ENCODE measurements at regions of chr6 and their contacts with region 1.

Region 1: GRCh38 chr6:42547407-42548329 is 16.2 kb upstream of the UBR2 start:
- DNase-seq: peak; percentile 45
- H3K4me3 ChIP-seq: peak overlapping the region; percentile 53
- H3K27ac ChIP-seq: no peak overlapping the region
- H3K27me3 ChIP-seq: no peaks in the 10 kb centered on the region
- CTCF ChIP-seq: peak; percentile 100

Region 2: DNA sequence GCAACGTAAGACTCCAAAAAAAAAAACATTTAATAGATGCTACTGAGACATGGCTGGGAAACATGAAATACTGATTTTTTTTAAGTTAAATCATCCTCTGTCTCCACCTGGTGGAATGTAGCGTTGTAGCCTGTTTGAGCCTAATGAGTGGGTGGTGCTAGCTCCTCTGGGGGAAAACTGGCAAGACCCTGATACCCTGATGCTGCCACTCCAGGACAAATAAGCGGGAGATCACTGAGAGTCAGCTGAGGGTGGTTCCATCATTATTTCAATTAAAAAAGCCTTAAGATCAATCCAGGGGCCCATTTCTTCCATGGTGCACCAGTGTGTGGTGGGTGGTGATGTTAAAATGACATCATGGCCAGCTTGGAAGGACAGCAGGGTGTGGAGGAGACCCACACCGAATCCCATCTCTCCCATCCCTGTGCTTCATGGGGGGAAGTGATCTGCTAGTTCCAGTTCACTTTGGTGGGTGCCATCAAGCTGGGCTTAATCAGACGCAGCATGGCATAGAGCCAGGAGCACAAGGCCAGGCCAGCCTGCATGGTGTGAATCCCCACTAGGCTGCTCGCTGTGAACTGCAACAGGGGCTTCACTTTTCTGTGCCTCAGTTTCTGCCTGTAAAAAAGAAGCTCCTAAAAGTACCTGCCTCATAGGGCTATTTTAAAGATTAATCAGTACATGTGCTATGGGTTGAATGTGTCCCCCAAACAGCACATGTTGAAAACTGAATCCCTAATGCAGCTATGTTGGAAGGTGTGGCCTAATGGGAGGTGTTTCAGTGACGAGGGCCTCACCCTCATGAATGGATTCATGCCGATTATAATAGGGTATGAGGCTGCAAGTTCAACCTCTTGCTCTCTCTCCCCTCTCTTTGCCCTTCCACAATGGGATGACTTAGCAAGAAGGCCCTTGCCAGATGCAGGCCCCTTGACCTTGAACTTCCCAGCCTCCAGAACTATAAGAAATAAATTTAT is 317.0 kb before region 1 on chr6:
- CTCF ChIA-PET with region 1: interaction called, 45 read pairs
- POLR2A ChIA-PET with region 1: no interaction called
- DNase-seq: no peak
- H3K4me3 ChIP-seq: no peak overlapping the region
- H3K27ac ChIP-seq: no peak overlapping the region
- H3K27me3 ChIP-seq: no peaks in the 10 kb centered on the region
- CTCF ChIP-seq: peak; percentile 56

Region 3: DNA sequence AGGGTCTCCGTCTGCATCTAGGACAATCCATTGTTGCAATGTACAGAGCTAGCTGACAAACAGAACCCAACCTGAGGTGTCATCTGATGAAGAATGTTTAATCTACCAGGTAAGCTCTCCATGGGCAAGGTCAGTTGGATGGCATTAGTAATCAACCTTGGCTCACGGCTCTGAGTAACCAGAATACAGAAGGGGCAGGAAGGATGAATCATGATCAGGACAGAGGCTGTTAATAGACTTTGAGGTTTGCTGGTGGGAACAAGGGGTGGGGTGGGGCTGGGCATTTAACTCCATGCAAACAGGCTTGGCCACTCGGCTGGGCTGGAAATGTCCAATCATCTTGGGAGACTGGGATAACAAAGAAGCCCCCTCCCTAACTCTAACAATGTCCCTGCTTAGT is 252.9 kb before region 1 on chr6:
- CTCF ChIA-PET with region 1: interaction called, 13 read pairs
- POLR2A ChIA-PET with region 1: no interaction called
- DNase-seq: no peak
- H3K4me3 ChIP-seq: no peak overlapping the region
- H3K27ac ChIP-seq: no peak overlapping the region
- H3K27me3 ChIP-seq: no peaks in the 10 kb centered on the region
- CTCF ChIP-seq: no peak

Region 4: GRCh38 chr6:42359021-42359420 is 188.6 kb before region 1 on chr6:
- CTCF ChIA-PET with region 1: interaction called, 13 read pairs
- POLR2A ChIA-PET with region 1: no interaction called
- DNase-seq: no peak
- H3K4me3 ChIP-seq: no peak overlapping the region
- H3K27ac ChIP-seq: no peak overlapping the region
- H3K27me3 ChIP-seq: no peaks in the 10 kb centered on the region
- CTCF ChIP-seq: no peak

Region 5: DNA sequence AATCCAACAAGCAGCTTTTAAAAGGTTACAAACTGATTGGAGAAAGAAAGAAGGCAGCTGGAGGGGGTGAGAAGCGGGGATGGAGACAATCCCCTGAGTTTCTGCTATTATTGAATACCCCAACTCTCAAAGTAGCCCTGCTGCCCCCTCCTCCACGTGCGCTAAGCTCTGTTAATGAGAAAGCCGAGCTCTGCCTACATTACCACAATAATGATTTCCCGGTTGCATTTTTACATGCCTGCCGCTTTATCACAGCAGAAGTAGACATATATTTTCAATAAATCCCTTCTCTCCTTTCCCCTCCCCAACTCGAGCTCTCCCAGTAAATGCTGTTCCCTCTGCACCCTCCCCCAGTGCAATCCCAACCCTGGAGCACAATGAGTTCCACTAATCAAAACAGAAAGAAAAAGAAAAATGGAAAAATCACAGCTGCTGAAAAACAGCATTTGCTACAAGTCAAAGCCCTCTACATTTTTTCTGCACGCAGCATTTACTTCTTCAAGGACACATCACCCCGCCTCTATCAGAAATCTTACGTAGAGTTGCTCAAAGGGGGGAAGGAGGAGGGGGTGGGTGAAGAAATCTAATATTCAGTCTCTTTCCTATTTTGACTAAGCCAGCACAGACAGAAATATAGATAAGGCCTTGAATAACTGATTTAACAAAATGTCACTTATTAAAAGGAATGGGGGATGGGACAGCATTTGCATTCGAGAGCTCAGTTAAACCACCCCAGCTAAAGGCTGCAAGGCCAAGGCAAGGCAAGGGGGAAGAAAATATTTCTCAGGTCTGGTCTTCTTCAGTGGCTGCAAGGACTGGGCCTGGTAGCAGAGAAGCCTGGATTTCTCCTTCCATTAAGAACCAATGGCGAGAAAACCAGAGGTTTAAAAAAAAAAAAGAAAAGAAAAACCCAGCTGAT is 106.6 kb before region 1 on chr6:
- CTCF ChIA-PET with region 1: interaction called, 37 read pairs
- POLR2A ChIA-PET with region 1: interaction called, 3 read pairs
- DNase-seq: peak; percentile 57
- H3K4me3 ChIP-seq: peak overlapping the region; percentile 27
- H3K27ac ChIP-seq: peak overlapping the region; percentile 63
- H3K27me3 ChIP-seq: no peaks in the 10 kb centered on the region
- CTCF ChIP-seq: no peak

Region 6: DNA sequence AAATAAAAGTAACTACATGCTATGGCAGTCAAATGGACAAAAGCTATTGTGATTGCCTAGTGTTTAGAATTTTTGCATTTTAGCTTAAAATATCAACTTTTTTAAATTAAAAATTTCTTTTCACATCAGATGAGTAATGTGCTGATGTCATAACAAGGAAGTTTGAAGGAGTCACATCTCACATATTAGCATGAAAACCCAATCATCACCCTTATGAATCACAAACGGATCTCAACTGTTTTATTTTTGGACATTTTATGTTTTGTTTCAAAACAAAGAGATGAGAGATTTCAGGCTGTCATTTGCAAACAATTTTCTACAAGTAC is 42.3 kb before region 1 on chr6:
- CTCF ChIA-PET with region 1: interaction called, 10 read pairs
- POLR2A ChIA-PET with region 1: no interaction called
- DNase-seq: no peak
- H3K4me3 ChIP-seq: no peak overlapping the region
- H3K27ac ChIP-seq: no peak overlapping the region
- H3K27me3 ChIP-seq: no peaks in the 10 kb centered on the region
- CTCF ChIP-seq: no peak

Region 7: GRCh38 chr6:42624601-42625000 is 76.9 kb after region 1 on chr6:
- CTCF ChIA-PET with region 1: no interaction called
- POLR2A ChIA-PET with region 1: no interaction called
- DNase-seq: no peak
- H3K4me3 ChIP-seq: no peak overlapping the region
- H3K27ac ChIP-seq: no peak overlapping the region
- H3K27me3 ChIP-seq: no peaks in the 10 kb centered on the region
- CTCF ChIP-seq: no peak

Region 8: DNA sequence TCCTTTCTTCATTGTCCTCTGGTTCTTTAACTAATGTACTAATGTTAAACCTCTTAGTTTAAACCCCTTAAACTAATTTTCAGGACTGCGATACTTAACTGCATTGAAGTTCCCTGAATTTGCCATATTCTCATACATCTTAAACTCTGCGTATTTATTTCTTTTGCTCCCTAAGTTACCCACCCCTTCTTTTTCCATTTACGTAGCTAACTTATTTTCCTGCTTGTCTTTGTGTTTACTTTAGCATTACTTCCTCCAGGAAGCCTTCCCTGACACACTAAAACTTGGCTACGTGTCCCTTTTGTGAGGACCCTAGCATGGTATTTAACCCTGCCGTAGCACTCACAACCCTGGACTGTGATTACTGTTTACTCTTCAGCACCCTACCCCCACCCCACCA is 95.1 kb after region 1 on chr6:
- CTCF ChIA-PET with region 1: no interaction called
- POLR2A ChIA-PET with region 1: no interaction called
- DNase-seq: no peak
- H3K4me3 ChIP-seq: no peak overlapping the region
- H3K27ac ChIP-seq: no peak overlapping the region
- H3K27me3 ChIP-seq: no peaks in the 10 kb centered on the region
- CTCF ChIP-seq: no peak

Region 9: GRCh38 chr6:42745181-42745706 is 197.6 kb after region 1 on chr6:
- CTCF ChIA-PET with region 1: no interaction called
- POLR2A ChIA-PET with region 1: no interaction called
- DNase-seq: no peak
- H3K4me3 ChIP-seq: peak overlapping the region; percentile 99
- H3K27ac ChIP-seq: peak overlapping the region; percentile 70
- H3K27me3 ChIP-seq: no peaks in the 10 kb centered on the region
- CTCF ChIP-seq: no peak

Measured in AG04450 (cell line).